WTC11 (cell line): ENCODE measurements at regions of chr19 and their contacts with region 1.

Region 1: DNA sequence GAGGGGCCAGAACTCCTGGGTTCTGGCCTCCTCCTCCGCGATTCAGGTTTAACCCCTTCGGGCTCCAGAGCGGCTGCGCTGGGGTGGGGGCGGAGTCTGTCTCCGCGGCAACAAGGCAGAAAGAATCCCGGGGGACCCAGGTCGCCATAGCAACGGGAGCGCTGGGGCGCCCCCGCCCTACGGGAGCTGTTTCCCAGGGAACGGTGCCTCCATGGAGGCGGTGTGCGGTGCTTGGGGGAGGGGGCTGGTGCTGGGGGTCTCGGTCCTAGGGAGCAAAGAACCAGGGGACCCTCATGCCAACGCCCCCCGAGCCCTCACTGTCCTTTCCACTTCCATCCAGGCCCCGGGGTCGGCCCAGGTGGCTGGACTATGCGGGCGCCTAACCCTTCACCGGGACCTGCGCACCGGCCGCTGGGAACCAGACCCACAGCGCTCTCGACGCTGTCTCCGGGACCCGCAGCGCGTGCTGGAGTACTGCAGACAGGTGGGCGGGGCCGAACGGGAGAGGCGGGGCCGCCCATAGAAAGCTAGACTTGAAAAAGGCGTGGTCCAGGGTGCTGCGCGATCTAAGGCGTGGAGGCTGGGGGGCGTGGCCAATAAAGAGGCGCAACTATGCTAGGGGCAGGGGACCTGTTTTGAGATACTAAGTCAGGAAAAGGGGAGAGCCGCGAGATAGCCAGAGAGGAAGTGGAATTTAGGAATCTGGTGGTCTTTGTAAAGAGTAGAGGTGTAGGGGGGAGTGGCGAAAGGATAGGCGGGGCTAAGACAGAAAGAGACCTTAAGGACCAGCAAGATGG is 1.2 kb downstream of the APLP1 start:
- DNase-seq: peak; percentile 97
- ATAC-seq: peak; percentile 79
- H3K4me3 Mint-ChIP-seq: peak overlapping the region; percentile 86
- H3K27ac Mint-ChIP-seq: peak overlapping the region; percentile 97
- H3K4me1 Mint-ChIP-seq: peaks cover 26% of the 10 kb centered on the region
- H3K27me3 Mint-ChIP-seq: peaks cover 45% of the 10 kb centered on the region
- CTCF ChIP-seq: no peak

Region 2: GRCh38 chr19:35775298-35776110 is 94.0 kb before region 1 on chr19 and contains the start of gene ARHGAP33:
- CTCF ChIA-PET with region 1: no interaction called
- POLR2A ChIA-PET with region 1: no interaction called
- DNase-seq: peak; percentile 100
- ATAC-seq: peak; percentile 87
- H3K4me3 Mint-ChIP-seq: peak within 1 kb of the TSS; percentile 70
- H3K27ac Mint-ChIP-seq: no peak within 1 kb of the TSS
- H3K4me1 Mint-ChIP-seq: peaks cover 30% of the 10 kb centered on the region
- H3K27me3 Mint-ChIP-seq: peaks cover 30% of the 10 kb centered on the region
- CTCF ChIP-seq: no peak
- total RNA-seq, gene ARHGAP33: 36.8 to 43.9 TPM (median 39.8 TPM) in 3 replicates

Region 3: DNA sequence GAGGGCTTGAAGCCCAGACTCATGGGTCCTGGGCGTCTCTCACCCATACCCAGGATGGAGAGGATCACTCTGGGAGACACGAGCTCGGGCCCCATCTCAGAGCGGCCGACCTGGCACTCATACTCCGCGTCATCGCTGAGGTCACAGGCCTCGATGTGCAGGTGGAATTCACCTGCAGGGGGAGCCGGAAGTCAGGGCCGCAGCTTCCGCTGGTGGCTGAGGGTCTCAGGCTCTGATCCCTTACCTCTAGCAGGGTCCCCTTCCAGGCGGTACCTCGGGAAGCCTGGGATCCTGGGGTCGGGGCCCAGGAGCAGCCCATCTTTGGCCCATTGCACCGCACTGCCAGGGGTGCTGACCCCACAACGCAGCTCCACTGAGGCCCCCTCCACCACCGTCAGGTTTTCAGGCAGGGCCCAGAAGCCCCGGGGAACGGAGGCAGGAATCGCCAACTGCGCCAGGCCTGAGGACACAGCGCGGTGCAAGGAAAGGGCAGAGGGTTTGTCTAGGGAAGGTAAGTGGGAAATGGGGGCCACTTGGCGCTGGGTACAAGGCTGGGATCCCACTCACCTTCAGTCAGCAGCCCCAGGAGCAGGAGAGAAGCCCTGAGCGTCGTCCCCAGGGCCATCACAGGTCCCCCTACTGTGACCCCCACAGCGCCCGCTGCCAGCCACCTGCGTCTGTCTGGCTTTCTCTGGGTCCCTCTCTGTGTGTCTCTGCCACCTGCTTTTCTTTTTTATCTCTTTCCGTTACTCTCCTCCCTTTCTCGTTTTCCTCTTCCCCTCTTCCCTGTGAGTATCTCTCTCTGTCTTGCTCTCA is 18.1 kb before region 1 on chr19:
- CTCF ChIA-PET with region 1: interaction called, 24 read pairs
- POLR2A ChIA-PET with region 1: interaction called, 8 read pairs
- DNase-seq: peak; percentile 84
- ATAC-seq: peak; percentile 83
- H3K4me3 Mint-ChIP-seq: peak overlapping the region; percentile 53
- H3K27ac Mint-ChIP-seq: peak overlapping the region; percentile 36; the same call in 1 of the 2 replicates
- H3K4me1 Mint-ChIP-seq: peaks cover 29% of the 10 kb centered on the region
- H3K27me3 Mint-ChIP-seq: peaks cover 86% of the 10 kb centered on the region
- CTCF ChIP-seq: peak; percentile 46; the same call in 1 of the 2 replicates

Region 4: GRCh38 chr19:35856546-35857149 is 12.9 kb before region 1 on chr19 and contains the start of gene KIRREL2:
- CTCF ChIA-PET with region 1: interaction called, 25 read pairs
- POLR2A ChIA-PET with region 1: interaction called, 12 read pairs
- DNase-seq: peak; percentile 72
- ATAC-seq: peak; percentile 9
- H3K4me3 Mint-ChIP-seq: peak within 1 kb of the TSS; percentile 91
- H3K27ac Mint-ChIP-seq: no peak within 1 kb of the TSS
- H3K4me1 Mint-ChIP-seq: peaks cover 32% of the 10 kb centered on the region
- H3K27me3 Mint-ChIP-seq: peaks cover 90% of the 10 kb centered on the region
- CTCF ChIP-seq: no peak
- total RNA-seq, gene KIRREL2: 4.7 to 5.3 TPM (median 4.9 TPM) in 3 replicates

Region 5: DNA sequence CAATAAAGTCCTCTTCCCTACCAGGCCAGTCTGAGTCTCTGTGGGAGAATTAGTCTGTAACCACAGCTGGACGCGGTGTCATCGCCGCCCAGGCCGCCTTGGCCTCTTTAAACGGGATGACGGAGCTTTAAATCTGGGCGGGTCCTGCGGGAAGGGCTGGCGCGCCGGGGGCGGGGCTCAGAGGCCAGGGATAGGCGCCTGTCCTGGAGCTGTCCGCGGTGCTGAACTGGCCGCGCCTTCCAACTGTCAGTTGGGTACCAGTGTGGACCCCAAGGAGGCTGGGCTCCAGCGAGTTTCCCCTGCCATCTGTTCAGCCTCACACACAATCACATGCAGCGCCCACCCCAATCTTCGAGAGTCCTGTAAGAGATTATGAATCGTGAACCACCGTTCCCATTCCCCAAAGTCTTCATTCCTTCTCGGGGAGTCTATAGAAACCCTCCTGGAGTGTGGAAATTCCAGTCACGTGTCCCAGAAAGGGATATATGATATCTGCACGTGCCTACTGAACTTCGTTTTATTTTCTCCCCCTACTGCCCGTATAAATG is 10.3 kb after region 1 on chr19:
- CTCF ChIA-PET with region 1: interaction called, 22 read pairs
- POLR2A ChIA-PET with region 1: interaction called, 15 read pairs
- DNase-seq: peak; percentile 98
- ATAC-seq: peak; percentile 95
- H3K4me3 Mint-ChIP-seq: peak overlapping the region; percentile 64
- H3K27ac Mint-ChIP-seq: peak overlapping the region; percentile 56; the same call in 1 of the 2 replicates
- H3K4me1 Mint-ChIP-seq: peaks cover 8% of the 10 kb centered on the region
- H3K27me3 Mint-ChIP-seq: peaks cover 44% of the 10 kb centered on the region
- CTCF ChIP-seq: no peak

Region 6: DNA sequence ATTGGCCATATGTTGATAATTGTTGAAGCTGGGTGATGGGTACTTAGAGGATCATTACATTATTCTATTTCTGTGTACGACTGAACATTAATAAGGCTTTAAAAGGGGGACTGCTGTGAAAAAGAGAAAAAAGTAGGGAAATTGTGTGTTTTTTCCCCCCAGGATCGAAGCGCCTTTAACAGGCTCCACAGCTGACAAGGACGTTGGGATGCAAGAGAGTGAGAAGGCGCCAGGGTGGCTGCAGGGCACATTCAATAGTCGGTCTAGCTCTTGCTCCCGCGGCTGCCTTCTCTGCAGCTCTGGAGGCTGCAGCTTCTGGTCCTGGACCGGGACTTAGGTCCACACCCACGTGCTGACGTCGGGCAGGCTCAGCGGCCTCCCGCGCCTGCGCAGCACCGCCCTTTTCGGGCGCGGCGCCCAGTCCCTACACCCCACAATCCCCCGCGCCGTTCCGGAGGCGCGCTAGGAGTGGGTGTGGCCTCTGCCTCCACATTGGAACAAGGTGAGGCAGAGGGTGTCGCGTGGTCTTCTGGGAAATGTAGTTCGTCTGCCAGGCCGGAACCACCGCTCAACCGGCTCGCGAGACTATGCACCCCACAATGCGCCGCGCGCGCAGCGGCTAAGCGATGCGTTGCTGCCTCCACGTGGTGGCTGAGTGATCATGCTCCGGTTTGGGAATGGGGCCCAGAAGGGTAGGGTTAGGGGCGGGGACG is 61.8 kb after region 1 on chr19:
- CTCF ChIA-PET with region 1: interaction called, 21 read pairs
- POLR2A ChIA-PET with region 1: no interaction called
- DNase-seq: peak; percentile 100
- ATAC-seq: peak; percentile 94
- H3K4me3 Mint-ChIP-seq: peak overlapping the region; percentile 64
- H3K27ac Mint-ChIP-seq: peak overlapping the region; percentile 95
- H3K4me1 Mint-ChIP-seq: peaks cover 25% of the 10 kb centered on the region
- H3K27me3 Mint-ChIP-seq: peaks cover 6% of the 10 kb centered on the region
- CTCF ChIP-seq: peak; percentile 47